HCT116 (cell line): ENCODE measurements at regions of chr20 and their contacts with region 1.

Region 1: DNA sequence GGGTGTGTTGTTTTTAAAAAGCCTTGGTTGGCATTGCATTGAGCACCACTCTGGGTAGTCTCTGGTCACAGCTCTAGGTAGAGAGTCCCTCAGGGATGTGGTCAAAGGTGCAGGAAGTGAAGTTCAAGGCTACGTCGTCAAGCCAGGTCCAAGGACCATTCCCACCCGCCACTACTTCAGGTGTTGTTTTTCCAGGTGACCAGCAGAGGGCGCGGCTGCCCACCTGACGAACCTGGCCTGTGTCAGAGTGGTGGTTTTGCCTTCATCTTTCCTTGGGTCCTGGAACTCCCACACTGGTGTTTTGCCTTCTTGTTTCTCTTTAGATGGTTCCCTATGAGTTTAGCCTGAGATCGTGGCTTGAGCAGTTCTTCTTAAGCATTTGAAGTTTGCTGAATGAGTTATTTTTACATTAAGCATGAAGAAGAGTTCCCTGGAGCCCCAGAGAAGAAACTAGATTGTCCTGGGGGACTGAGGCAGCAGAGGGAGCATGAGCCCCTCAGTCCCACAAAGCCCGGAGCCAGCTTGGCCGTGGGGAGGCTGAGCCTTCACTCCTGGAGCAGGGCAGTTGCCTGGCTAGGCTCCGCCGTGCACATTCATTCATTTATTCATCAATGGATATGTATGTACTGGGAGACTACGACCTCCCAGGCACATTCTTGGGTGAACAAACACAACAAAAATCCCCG is 5.6 kb upstream of the PHACTR3 start:
- DNase-seq: peak; percentile 19
- ATAC-seq: peak; percentile 97
- H3K4me3 ChIP-seq: no peak overlapping the region
- H3K27ac ChIP-seq: no peak overlapping the region
- H3K4me1 ChIP-seq: no peaks in the 10 kb centered on the region
- H3K27me3 ChIP-seq: peaks cover 53% of the 10 kb centered on the region
- CTCF ChIP-seq: peak; percentile 63 to 91 (median 84); a peak in 5 of 6 replicates
- POLR2A ChIP-seq: no peak
- RAD21 ChIP-seq: peak; percentile 77

Region 2: GRCh38 chr20:59645761-59646171 is 47.0 kb after region 1 on chr20:
- CTCF ChIA-PET with region 1: interaction called, 4 read pairs
- POLR2A ChIA-PET with region 1: no interaction called
- RAD21 ChIA-PET with region 1: no interaction called
- intact Hi-C with region 1: loop called (anchors 2 kb)
- DNase-seq: no peak
- ATAC-seq: peak; percentile 82
- H3K4me3 ChIP-seq: no peak overlapping the region
- H3K27ac ChIP-seq: no peak overlapping the region
- H3K4me1 ChIP-seq: no peaks in the 10 kb centered on the region
- H3K27me3 ChIP-seq: peaks cover 22% of the 10 kb centered on the region
- CTCF ChIP-seq: peak in 2 of 3 experiments; percentile 45 to 52; a peak in 4 of 6 replicates
- POLR2A ChIP-seq: no peak
- RAD21 ChIP-seq: no peak

Region 3: DNA sequence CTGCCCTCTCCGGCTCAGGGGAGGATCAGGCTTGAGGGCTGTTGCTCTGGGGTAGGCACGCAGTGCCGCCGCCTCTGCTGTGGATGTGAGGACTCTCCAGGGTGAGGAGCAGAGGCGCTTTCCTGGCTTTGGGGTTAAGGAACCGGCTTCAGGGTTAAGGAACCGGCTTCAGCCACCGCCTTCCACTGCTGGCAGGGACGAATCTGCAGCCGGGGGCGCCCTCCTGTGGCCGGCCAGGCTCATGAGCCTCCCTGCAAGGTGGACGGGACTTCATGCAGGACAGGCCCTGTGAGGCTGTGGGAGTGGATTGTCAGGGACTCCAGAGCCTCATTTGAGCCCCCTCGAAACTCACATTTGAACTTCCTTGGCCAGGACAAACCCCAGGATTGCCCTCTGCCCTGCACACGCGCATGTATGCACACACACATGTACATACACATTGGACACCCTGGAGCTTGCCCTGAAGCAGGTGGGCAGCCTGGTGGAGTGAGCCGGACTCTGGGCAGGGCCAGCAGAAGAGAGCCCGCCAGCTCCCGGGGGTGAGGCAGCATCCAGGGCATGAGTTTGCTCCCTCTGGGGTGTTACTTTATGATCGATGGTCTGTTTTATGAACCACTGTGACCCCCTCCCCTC is 152.4 kb after region 1 on chr20:
- CTCF ChIA-PET with region 1: no interaction called
- POLR2A ChIA-PET with region 1: no interaction called
- RAD21 ChIA-PET with region 1: no interaction called
- intact Hi-C with region 1: loop called (anchors 1 kb)
- DNase-seq: peak; percentile 27
- ATAC-seq: peak; percentile 95
- H3K4me3 ChIP-seq: no peak overlapping the region
- H3K27ac ChIP-seq: no peak overlapping the region
- H3K4me1 ChIP-seq: no peaks in the 10 kb centered on the region
- H3K27me3 ChIP-seq: peaks cover 11% of the 10 kb centered on the region; the same call in 1 of the 2 replicates
- CTCF ChIP-seq: peak; percentile 75 to 89 (median 81)
- POLR2A ChIP-seq: no peak
- RAD21 ChIP-seq: peak; percentile 81